OCI-LY7 (cell line): ENCODE measurements at regions of chr13 and their contacts with region 1.

Region 1: DNA sequence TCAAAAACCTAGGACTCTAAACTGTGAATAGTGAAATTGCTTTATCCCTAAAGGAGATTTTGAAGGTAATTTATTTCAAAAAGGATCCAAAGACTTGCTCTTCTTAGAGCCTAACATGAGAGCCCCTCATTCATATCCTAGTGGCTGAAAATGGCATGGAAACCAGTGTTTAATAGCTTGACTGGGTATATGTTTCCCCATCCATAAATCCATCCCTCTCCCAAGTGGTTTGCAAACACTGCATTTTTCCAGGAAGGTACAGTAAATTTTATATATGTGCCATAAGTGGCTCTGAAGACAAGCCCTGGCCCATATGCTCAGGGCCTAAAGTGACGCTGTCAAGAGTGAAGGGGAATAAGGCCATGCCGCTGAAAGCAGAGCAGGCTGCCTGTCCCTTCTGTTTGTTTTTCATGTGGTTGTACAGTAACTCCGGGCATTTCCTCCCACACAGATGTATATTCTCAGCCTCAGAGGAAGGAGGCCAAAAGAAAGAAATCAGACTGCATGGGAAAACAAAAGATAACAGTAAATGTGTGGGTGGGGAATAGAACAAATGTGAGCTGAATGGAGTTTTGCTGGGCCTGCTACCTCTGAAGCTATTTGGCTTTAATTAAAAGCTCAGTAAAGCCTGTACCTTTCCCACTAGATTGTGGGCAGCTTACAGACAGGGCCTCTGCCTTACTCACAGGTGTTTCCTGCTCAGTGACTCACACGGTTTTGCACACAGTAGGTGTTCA is 181.9 kb downstream of the PCDH9 start:
- DNase-seq: peak; percentile 27
- H3K4me3 ChIP-seq: no peak overlapping the region
- H3K27ac ChIP-seq: no peak overlapping the region
- H3K4me1 ChIP-seq: peaks cover 9% of the 10 kb centered on the region
- CTCF ChIP-seq: no peak

Region 2: DNA sequence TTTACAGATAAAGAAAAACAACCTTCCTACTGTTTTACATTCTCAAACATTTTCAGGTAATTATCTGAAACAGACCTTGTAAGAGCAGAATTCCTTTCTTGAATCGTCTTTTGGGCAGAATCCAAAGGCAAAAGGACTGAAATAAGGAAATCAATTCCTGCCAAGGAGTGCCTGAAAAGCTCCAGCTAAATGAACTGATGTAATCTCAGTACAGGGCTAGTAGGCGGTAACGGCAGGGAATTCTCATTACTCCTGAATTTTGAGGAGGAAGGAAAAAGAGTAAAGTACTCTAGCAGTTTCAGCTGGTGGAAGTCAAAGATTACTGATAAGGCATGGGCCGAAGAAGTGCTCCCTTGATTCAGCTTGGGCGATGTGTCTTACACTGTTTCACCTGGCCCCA is 13.5 kb after region 1 on chr13:
- CTCF ChIA-PET with region 1: no interaction called
- POLR2A ChIA-PET with region 1: interaction called, 14 read pairs
- intact Hi-C with region 1: no loop called
- DNase-seq: no peak
- H3K4me3 ChIP-seq: no peak overlapping the region
- H3K27ac ChIP-seq: no peak overlapping the region
- H3K4me1 ChIP-seq: peaks cover 9% of the 10 kb centered on the region
- CTCF ChIP-seq: no peak